Dendritic cell treated with granulocyte-macrophage colony-stimulating factor and Interleukin-4, amounts not matched to agents 40 ng/mL and 50 ng/mL, for 4 days (primary cell): ENCODE measurements at regions of chr2 and their contacts with region 1.

Region 1: DNA sequence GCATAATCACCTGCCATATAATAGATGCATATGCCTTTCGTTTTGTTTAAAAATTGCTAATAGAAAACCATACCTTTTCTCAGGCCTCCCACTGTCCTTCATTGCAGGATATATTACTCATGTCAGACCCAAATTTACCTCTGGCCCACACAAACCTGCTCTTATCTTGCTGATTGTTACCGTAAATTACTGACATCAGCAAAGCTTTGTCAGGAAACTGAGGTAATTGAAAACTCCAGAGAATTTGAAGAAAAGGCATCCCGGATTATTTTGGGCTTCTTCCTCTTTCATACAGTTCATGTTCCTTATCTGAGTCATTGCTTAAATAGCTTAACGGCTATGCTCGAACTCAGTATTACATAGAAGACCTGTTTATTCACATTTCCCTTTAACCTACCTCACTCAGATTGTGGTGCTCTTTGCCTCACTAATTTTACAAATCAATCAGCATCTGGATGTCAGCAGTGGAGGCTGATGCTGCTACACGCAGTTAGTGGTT is 145.7 kb downstream of the ZEB2 start:
- H3K4me3 Mint-ChIP-seq: no peak overlapping the region
- H3K27ac Mint-ChIP-seq: peak overlapping the region; percentile 64
- H3K4me1 Mint-ChIP-seq: peaks cover 79% of the 10 kb centered on the region
- H3K27me3 Mint-ChIP-seq: no peaks in the 10 kb centered on the region

Region 2: DNA sequence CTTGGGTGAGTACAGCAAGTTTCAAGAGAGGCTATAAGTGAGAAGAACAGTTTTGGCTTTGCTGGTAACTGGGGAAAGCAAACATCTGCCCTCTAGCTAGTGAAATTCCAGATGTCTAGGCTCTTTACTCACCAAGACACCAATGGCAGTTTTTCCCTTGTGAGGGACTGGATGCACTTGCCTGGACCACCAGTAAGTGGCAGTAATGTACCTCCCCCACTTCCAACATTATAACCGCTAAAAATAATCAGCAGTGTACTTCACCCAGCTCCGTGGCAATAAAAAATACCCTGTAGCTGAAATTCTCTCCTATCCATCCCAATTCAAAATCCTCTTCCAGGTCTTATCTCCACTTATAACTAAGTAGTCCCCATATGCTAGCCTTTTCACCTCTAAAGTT is 861.1 kb before region 1 on chr2:
- intact Hi-C with region 1: loop called (anchors 10 kb)
- H3K4me3 Mint-ChIP-seq: no peak overlapping the region
- H3K27ac Mint-ChIP-seq: peak overlapping the region; percentile 29
- H3K4me1 Mint-ChIP-seq: peaks cover 6% of the 10 kb centered on the region
- H3K27me3 Mint-ChIP-seq: no peaks in the 10 kb centered on the region

Region 3: GRCh38 chr2:144583741-144584453 is 209.7 kb after region 1 on chr2:
- intact Hi-C with region 1: no loop called
- H3K4me3 Mint-ChIP-seq: no peak overlapping the region
- H3K27ac Mint-ChIP-seq: no peak overlapping the region
- H3K4me1 Mint-ChIP-seq: peaks cover 35% of the 10 kb centered on the region
- H3K27me3 Mint-ChIP-seq: no peaks in the 10 kb centered on the region

Region 4: GRCh38 chr2:145258903-145259579 is 884.8 kb after region 1 on chr2:
- intact Hi-C with region 1: no loop called
- H3K4me3 Mint-ChIP-seq: no peak overlapping the region
- H3K27ac Mint-ChIP-seq: no peak overlapping the region
- H3K4me1 Mint-ChIP-seq: peaks cover 20% of the 10 kb centered on the region
- H3K27me3 Mint-ChIP-seq: peaks cover 78% of the 10 kb centered on the region